ENCODE measurements at regions of chr2 and their contacts with region 1.

Region 1: GRCh38 chr2:160375802-160376469 is 117.7 kb downstream of the RBMS1 start:
- DNase-seq: no peak

Region 2: DNA sequence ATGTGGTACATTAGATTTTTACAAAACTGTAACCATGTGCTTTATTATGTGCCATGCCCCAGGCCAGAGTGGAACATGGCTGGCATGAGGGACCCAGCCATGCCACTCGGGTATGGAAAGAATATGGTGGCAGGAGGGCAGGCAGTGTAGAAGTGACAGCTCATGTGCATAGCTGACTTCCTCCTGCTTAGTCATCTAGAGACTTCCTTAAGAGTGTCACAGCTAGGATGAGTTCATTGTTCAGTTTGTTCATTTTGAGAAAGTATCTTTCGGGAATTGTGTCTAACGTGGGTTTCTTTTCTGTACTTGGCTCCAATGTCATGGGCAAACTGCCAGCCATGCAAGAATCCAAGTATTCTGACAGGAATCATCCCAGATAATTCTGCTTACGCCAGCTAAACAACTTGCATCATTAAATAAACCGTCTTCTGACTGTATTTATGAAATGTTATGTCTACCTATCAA is 81.6 kb before region 1 on chr2:
- intact Hi-C with region 1: loop called (anchors 5 kb)
- DNase-seq: no peak

Region 3: DNA sequence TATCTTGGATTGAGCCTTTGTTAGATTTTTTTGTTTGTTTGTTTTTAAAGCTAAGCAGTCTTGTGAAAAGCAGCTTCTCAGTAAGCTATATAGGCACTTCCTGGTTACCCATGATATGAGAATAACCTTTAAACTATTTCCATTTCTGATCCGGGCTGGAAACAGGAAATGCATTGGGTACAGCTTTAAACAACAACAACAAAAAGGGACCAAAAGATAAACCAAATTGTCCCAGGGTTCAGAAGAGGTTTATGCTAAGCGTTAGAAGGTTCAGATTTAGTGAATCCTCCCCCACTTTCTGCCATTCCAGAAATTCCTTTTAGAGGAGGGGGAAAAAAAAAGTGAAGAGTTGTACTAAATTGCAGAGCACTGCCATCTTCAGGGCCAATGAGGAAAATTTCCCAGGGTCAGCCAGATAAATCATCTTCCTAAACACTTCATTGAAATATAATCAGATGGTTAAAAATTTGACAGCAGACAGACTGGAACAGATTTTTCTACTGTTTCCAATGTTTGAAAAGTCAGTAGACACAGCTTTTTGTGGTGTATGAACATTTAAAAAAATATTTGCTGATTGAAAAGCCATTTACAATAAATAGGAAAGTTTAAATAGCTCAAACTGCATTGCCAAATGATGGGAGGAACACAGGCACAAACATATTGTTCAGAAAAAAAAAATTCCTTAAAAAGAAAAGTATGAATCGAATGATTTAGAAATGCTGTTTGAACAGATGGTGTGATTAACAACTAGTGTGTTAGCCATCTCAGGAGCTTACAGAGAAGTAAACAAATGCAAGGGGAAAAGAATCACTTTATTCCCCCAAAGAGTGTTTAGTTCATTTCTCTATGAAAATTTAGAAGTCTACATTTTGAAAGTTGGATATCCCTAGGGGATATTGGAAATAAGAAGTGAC is 594.4 kb after region 1 on chr2:
- intact Hi-C with region 1: loop called (anchors 5 kb)
- DNase-seq: no peak